Activated CD8-positive, alpha-beta T cell treated with anti-CD3 and anti-CD28 coated beads for 36 hours (primary cell): ENCODE measurements at regions of chr10 and their contacts with region 1.

Region 1: GRCh38 chr10:89086801-89087521 is 96.4 kb downstream of the FAS start:
- DNase-seq: peak; percentile 66
- ATAC-seq: peak; percentile 68
- H3K4me3 Mint-ChIP-seq: no peak overlapping the region
- H3K27ac Mint-ChIP-seq: no peak overlapping the region
- H3K4me1 Mint-ChIP-seq: peaks cover 18% of the 10 kb centered on the region
- H3K27me3 Mint-ChIP-seq: no peaks in the 10 kb centered on the region
- CTCF ChIP-seq: no peak

Region 2: GRCh38 chr10:88693392-88694020 is 393.5 kb before region 1 on chr10:
- CTCF ChIA-PET with region 1: no interaction called
- POLR2A ChIA-PET with region 1: no interaction called
- intact Hi-C with region 1: no loop called
- DNase-seq: no peak
- ATAC-seq: no peak
- H3K4me3 Mint-ChIP-seq: no peak overlapping the region
- H3K27ac Mint-ChIP-seq: no peak overlapping the region
- H3K4me1 Mint-ChIP-seq: no peaks in the 10 kb centered on the region
- H3K27me3 Mint-ChIP-seq: peaks cover 8% of the 10 kb centered on the region
- CTCF ChIP-seq: no peak

Region 3: GRCh38 chr10:88841316-88842111 is 245.4 kb before region 1 on chr10:
- CTCF ChIA-PET with region 1: no interaction called
- POLR2A ChIA-PET with region 1: no interaction called
- intact Hi-C with region 1: no loop called
- DNase-seq: peak; percentile 49
- ATAC-seq: peak; percentile 37
- H3K4me3 Mint-ChIP-seq: no peak overlapping the region
- H3K27ac Mint-ChIP-seq: no peak overlapping the region
- H3K4me1 Mint-ChIP-seq: peaks cover 15% of the 10 kb centered on the region
- H3K27me3 Mint-ChIP-seq: peaks cover 2% of the 10 kb centered on the region
- CTCF ChIP-seq: no peak

Region 4: GRCh38 chr10:89037096-89037495 is 49.9 kb before region 1 on chr10:
- CTCF ChIA-PET with region 1: no interaction called
- POLR2A ChIA-PET with region 1: no interaction called
- intact Hi-C with region 1: no loop called
- DNase-seq: no peak
- ATAC-seq: no peak
- H3K4me3 Mint-ChIP-seq: no peak overlapping the region
- H3K27ac Mint-ChIP-seq: no peak overlapping the region
- H3K4me1 Mint-ChIP-seq: peaks cover 15% of the 10 kb centered on the region
- H3K27me3 Mint-ChIP-seq: peaks cover 2% of the 10 kb centered on the region
- CTCF ChIP-seq: no peak

Region 5: GRCh38 chr10:89163265-89163995 is 76.5 kb after region 1 on chr10:
- CTCF ChIA-PET with region 1: interaction called, 3 read pairs
- POLR2A ChIA-PET with region 1: no interaction called
- intact Hi-C with region 1: loop called (anchors 10 kb)
- DNase-seq: peak; percentile 82
- ATAC-seq: peak; percentile 96
- H3K4me3 Mint-ChIP-seq: peak overlapping the region; percentile 63
- H3K27ac Mint-ChIP-seq: peak overlapping the region; percentile 73
- H3K4me1 Mint-ChIP-seq: peaks cover 39% of the 10 kb centered on the region
- H3K27me3 Mint-ChIP-seq: peaks cover 4% of the 10 kb centered on the region
- CTCF ChIP-seq: no peak